MCF 10A (cell line): ENCODE measurements at regions of chr5 and their contacts with region 1.

Region 1: DNA sequence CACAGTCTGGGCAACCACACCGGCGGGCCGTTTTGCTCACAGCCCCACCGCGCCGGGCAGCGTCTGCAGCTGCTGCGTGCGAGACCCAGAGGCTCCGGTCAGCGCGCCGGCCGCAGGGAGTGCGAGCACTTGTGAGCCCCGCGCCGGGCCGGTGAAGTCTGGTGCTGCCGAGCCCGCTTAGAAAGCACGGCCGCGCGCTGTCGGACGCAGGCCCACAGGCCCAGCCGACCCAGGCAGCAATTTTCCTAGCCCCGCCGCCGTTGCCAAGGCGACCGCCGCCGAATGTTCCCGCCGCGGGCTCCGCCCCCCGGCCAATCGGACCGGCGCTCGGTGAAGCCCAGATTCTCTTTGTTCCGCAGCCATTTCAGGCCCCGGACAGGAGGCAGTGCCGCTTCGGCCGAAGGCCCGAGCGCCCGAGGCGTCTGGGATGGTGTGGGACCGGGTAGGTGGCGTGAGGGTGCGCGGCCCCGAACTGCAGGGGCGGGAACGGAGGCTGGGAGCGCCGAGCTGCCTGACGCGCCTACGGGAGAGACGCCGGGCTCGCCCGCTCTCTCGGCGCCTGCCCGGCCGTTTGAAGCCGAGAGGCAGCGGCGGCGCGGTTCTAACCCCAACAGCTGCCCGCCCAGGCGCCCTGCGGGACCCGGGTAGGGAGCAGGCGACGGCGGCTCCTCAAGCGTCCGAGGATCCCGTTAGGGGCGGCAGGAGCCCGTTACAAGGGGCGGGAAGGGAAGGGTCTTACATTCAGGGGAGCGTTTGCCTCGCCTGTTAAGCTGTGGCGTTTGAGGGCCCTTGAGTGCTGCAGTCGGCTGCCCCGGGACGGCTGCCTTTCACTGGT is at the start of gene TNPO1:
- DNase-seq: peak; percentile 94
- H3K4me3 Mint-ChIP-seq: peak within 1 kb of the TSS; percentile 97
- H3K27ac Mint-ChIP-seq: peak within 1 kb of the TSS; percentile 90
- H3K4me1 Mint-ChIP-seq: peaks cover 15% of the 10 kb centered on the region
- H3K27me3 Mint-ChIP-seq: no peaks in the 10 kb centered on the region
- CTCF ChIP-seq: no peak
- total RNA-seq, gene TNPO1: 147 and 167 TPM in 2 replicates

Region 2: GRCh38 chr5:71782771-71783770 is 1033.5 kb before region 1 on chr5:
- CTCF ChIA-PET with region 1: interaction called, 3 read pairs
- POLR2A ChIA-PET with region 1: no interaction called
- intact Hi-C with region 1: loop called (anchors 5 kb)
- DNase-seq: peak; percentile 75
- H3K4me3 Mint-ChIP-seq: no peak overlapping the region
- H3K27ac Mint-ChIP-seq: no peak overlapping the region
- H3K4me1 Mint-ChIP-seq: peaks cover 13% of the 10 kb centered on the region
- H3K27me3 Mint-ChIP-seq: peaks cover 7% of the 10 kb centered on the region
- CTCF ChIP-seq: peak; percentile 66

Region 3: DNA sequence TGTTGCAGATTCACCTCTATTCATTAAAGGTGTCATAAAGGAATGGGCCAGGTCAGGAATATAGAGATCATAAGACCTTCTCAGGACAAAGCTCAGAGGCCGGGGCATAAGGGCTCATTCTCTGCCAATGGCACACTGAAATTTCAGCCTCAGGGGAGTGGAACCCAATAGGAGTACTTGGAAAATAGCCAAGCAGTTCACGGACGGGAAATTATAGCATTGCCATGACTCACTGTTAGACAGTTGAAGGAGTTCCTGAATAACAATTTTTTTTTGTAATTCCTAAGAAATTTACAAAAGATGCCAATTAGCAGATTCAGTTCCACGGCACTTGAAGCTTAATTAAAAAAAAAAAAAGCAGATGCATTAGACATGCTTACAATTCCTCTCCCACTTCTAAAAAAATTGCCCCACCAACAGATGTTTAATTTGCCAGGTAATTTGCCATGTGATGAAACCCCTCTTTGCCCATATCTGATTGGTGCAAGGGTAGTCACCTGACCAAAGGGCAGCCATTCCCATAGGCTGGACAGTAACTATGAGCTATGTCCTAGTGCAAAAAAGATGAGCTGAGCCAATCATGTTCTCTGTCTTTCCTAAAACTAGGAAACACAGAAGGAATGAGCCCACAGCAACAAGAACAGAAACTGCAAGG is 437.8 kb before region 1 on chr5:
- CTCF ChIA-PET with region 1: no interaction called
- POLR2A ChIA-PET with region 1: interaction called, 25 read pairs
- intact Hi-C with region 1: no loop called
- DNase-seq: peak; percentile 98
- H3K4me3 Mint-ChIP-seq: peak overlapping the region; percentile 38
- H3K27ac Mint-ChIP-seq: peak overlapping the region; percentile 98
- H3K4me1 Mint-ChIP-seq: peaks cover 40% of the 10 kb centered on the region
- H3K27me3 Mint-ChIP-seq: no peaks in the 10 kb centered on the region
- CTCF ChIP-seq: no peak

Region 4: GRCh38 chr5:72486371-72486770 is 330.2 kb before region 1 on chr5:
- CTCF ChIA-PET with region 1: interaction called, 4 read pairs
- POLR2A ChIA-PET with region 1: interaction called, 11 read pairs
- intact Hi-C with region 1: no loop called
- DNase-seq: no peak
- H3K4me3 Mint-ChIP-seq: no peak overlapping the region
- H3K27ac Mint-ChIP-seq: peak overlapping the region; percentile 96
- H3K4me1 Mint-ChIP-seq: peaks cover 27% of the 10 kb centered on the region
- H3K27me3 Mint-ChIP-seq: no peaks in the 10 kb centered on the region
- CTCF ChIP-seq: no peak

Region 5: GRCh38 chr5:72604111-72604797 is 212.3 kb before region 1 on chr5:
- CTCF ChIA-PET with region 1: interaction called, 59 read pairs
- POLR2A ChIA-PET with region 1: interaction called, 42 read pairs
- intact Hi-C with region 1: no loop called
- DNase-seq: peak; percentile 66
- H3K4me3 Mint-ChIP-seq: peak overlapping the region; percentile 41
- H3K27ac Mint-ChIP-seq: no peak overlapping the region
- H3K4me1 Mint-ChIP-seq: peaks cover 6% of the 10 kb centered on the region
- H3K27me3 Mint-ChIP-seq: no peaks in the 10 kb centered on the region
- CTCF ChIP-seq: no peak

Region 6: DNA sequence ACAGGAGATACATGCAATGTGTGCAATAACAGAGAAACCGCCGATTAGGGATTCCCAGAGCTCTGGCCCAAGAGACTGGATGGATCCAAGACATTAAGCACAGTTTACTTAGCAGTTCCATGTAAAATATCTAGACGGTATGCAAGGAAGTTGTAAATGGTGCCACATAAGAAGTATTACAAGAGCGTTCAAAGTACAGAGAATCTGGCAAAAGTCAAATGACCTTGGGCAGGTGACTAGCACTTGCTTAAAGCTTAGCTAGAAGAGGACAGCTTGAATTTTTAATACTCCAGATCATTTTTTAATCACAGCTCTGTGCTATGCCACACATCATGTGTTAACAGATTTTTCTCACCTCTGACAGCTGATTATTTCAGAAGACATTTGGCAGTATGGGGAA is 72.4 kb before region 1 on chr5:
- CTCF ChIA-PET with region 1: no interaction called
- POLR2A ChIA-PET with region 1: no interaction called
- intact Hi-C with region 1: no loop called
- DNase-seq: no peak
- H3K4me3 Mint-ChIP-seq: no peak overlapping the region
- H3K27ac Mint-ChIP-seq: no peak overlapping the region
- H3K4me1 Mint-ChIP-seq: no peaks in the 10 kb centered on the region
- H3K27me3 Mint-ChIP-seq: no peaks in the 10 kb centered on the region
- CTCF ChIP-seq: no peak

Region 7: GRCh38 chr5:72829707-72830106 is 13.2 kb after region 1 on chr5:
- CTCF ChIA-PET with region 1: interaction called, 11 read pairs
- POLR2A ChIA-PET with region 1: interaction called, 24 read pairs
- intact Hi-C with region 1: no loop called
- DNase-seq: no peak
- H3K4me3 Mint-ChIP-seq: no peak overlapping the region
- H3K27ac Mint-ChIP-seq: peak overlapping the region; percentile 8
- H3K4me1 Mint-ChIP-seq: peaks cover 20% of the 10 kb centered on the region
- H3K27me3 Mint-ChIP-seq: no peaks in the 10 kb centered on the region
- CTCF ChIP-seq: no peak

Region 8: DNA sequence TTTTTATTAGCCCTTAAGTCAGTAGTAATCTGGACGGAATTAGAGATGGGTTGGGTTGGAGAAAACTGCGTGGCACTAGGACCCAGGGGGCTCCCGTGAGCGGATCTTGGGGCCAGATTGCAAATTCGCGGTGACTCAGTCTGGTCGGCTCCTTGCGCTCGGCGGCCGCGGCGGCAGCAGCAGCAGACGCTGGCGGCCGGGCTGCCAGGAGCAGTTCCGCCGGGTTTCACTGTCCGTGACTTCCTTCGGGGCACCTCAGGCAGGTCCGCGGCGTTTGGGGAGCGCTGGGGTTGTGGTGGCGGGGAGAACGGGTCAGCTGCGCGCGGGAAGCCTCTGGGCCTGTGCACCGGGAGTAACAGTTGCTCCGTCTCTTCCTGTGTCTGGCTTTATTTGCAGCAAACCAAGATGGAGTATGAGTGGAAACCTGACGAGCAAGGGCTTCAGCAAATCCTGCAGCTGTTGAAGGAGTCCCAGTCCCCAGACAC is 31.5 kb after region 1 on chr5:
- CTCF ChIA-PET with region 1: interaction called, 18 read pairs
- POLR2A ChIA-PET with region 1: interaction called, 229 read pairs
- intact Hi-C with region 1: loop called (anchors 2 kb)
- DNase-seq: peak; percentile 93
- H3K4me3 Mint-ChIP-seq: peak overlapping the region; percentile 98
- H3K27ac Mint-ChIP-seq: peak overlapping the region; percentile 91
- H3K4me1 Mint-ChIP-seq: peaks cover 43% of the 10 kb centered on the region
- H3K27me3 Mint-ChIP-seq: no peaks in the 10 kb centered on the region
- CTCF ChIP-seq: no peak